ENCODE measurements at regions of chr2 and their contacts with region 1.

Region 1: GRCh38 chr2:233353769-233354499 is at the start of gene DGKD:
- DNase-seq: peak; percentile 87
- ATAC-seq: peak; percentile 79
- total RNA-seq, gene DGKD: 29.2 TPM

Region 2: GRCh38 chr2:232957657-232958090 is 396.3 kb before region 1 on chr2:
- intact Hi-C with region 1: no loop called
- DNase-seq: no peak
- ATAC-seq: no peak

Region 3: GRCh38 chr2:233387667-233388528 is 34.0 kb after region 1 on chr2:
- intact Hi-C with region 1: loop called (anchors 2 kb)
- DNase-seq: peak; percentile 92
- ATAC-seq: peak; percentile 95

Region 4: DNA sequence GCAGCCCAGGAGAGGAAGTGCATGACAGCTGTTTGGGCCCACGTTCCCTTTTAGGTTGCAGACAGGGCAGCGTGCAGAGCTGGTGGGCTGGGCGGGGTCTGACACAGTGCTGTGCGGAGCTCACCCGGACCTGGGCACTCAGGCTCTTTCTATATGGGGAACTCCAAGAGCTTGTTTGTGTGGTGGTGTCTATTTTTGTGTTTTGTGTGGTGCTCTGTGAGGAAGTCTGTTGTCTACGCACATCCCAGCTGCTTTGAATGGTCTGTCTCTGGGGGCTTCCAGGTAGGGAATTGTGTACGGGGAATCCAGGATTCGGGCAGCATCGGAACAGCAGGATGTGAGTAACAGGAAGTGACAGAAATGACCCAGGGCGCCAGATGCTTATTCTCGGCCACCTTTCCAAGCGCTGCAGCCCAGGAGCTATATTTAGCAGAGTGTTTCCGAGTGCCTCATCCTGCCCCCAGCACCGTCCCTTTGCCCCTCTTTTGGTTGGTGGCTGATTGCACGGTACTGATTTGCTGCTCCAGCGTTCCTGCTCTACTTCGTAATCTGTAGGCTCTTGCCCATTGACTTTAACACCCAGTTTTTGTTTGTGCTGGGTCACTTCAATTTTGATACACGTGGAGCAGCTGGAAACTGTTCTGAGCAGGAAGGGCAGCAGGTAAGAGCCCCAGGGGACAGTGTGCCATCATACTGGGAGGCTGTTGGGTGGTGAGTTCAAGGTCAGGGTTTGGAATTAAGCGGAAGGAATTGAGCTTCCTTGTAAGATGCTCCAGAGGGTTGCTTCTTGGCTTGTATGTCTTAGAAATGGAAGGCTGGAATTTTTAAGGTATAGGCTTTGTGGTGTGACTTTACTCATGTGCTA is 65.1 kb after region 1 on chr2:
- intact Hi-C with region 1: no loop called
- DNase-seq: no peak
- ATAC-seq: peak; percentile 88

Measured in Right ventricle myocardium inferior (tissue), 1 donor.